Transverse colon (tissue), 4 donors: ENCODE measurements at regions of chr7 and their contacts with region 1.

Region 1: GRCh38 chr7:37198906-37199485 is 249.7 kb downstream of the ELMO1 start:
- DNase-seq: peak; percentile 81
- H3K4me3 ChIP-seq: no peak overlapping the region
- H3K27ac ChIP-seq: no peak overlapping the region
- H3K4me1 ChIP-seq: peaks cover 0 to 19% (median 17%) of the 10 kb centered on the region in 4 donors
- H3K27me3 ChIP-seq: no peaks in the 10 kb centered on the region
- CTCF ChIP-seq: peak; percentile 83 to 90 (median 84)
- EP300 ChIP-seq: no peak
- POLR2A ChIP-seq: no peak

Region 2: DNA sequence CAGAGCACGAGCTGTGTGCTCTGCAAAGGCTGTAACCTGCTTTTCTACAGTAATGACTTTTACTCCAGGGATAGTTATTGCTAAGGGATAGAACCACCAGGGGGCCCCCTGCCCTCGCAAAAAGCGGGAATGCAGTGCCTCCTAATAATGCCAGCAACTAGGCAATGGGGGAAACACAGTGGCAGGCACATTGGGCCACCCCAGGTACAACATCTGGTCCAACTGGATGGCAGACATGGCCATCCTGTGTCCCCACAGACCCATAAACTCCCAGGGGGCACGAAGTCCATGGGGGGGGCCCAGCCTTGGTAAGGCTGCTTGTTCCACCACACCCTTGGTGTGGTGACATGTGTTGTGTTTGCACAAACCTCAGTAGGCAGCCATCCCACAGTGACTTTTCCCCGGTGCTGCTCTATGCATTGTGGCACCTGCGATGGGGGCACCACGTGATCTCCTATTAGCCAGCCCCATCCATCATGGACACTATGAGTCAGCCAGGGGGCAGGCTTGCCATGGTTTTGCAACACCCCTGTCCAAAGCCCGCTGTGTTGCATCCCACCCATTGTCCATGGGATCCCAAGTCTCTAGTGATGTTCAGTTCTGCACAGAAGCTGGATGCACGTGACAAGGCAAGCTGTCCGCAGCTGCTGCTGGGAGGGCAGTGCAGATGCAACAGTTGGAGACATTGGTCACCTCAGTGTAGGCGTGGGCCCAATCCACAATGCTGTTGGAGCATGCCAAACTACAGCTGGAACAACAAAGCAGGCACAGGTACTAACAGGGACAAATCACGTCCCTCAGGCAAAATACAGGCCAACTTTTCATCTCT is 725.3 kb before region 1 on chr7:
- in situ Hi-C with region 1: loop called in 3 of 4 experiments (anchors 10 to 25 kb)
- intact Hi-C with region 1: no loop called
- DNase-seq: peak; percentile 55
- H3K4me3 ChIP-seq: no peak overlapping the region
- H3K27ac ChIP-seq: no peak overlapping the region
- H3K4me1 ChIP-seq: no peaks in the 10 kb centered on the region
- H3K27me3 ChIP-seq: no peaks in the 10 kb centered on the region
- CTCF ChIP-seq: peak; percentile 43 to 57 (median 44)
- EP300 ChIP-seq: no peak
- POLR2A ChIP-seq: no peak

Region 3: GRCh38 chr7:36670585-36671431 is 528.2 kb before region 1 on chr7:
- in situ Hi-C with region 1: loop called in 3 of 4 experiments (anchors 25 kb)
- intact Hi-C with region 1: no loop called
- DNase-seq: peak; percentile 79
- H3K4me3 ChIP-seq: no peak overlapping the region
- H3K27ac ChIP-seq: no peak overlapping the region
- H3K4me1 ChIP-seq: peaks cover 0 to 17% (median 5%) of the 10 kb centered on the region in 4 donors
- H3K27me3 ChIP-seq: no peaks in the 10 kb centered on the region
- CTCF ChIP-seq: peak; percentile 73 to 90 (median 85)
- EP300 ChIP-seq: no peak
- POLR2A ChIP-seq: no peak

Region 4: GRCh38 chr7:36686499-36686898 is 512.5 kb before region 1 on chr7:
- in situ Hi-C with region 1: loop called in 1 of 4 experiments (anchors 25 kb)
- intact Hi-C with region 1: no loop called
- DNase-seq: no peak
- H3K4me3 ChIP-seq: no peak overlapping the region
- H3K27ac ChIP-seq: no peak overlapping the region
- H3K4me1 ChIP-seq: peaks cover 0 to 6% (median 0%) of the 10 kb centered on the region in 4 donors
- H3K27me3 ChIP-seq: no peaks in the 10 kb centered on the region
- CTCF ChIP-seq: no peak
- EP300 ChIP-seq: no peak
- POLR2A ChIP-seq: no peak

Region 5: GRCh38 chr7:37150856-37151255 is 48.1 kb before region 1 on chr7:
- in situ Hi-C with region 1: no loop called
- intact Hi-C with region 1: no loop called
- DNase-seq: no peak
- H3K4me3 ChIP-seq: no peak overlapping the region
- H3K27ac ChIP-seq: no peak overlapping the region
- H3K4me1 ChIP-seq: peaks cover 6 to 21% (median 11%) of the 10 kb centered on the region in 4 donors
- H3K27me3 ChIP-seq: no peaks in the 10 kb centered on the region
- CTCF ChIP-seq: no peak
- EP300 ChIP-seq: no peak
- POLR2A ChIP-seq: no peak

Region 6: DNA sequence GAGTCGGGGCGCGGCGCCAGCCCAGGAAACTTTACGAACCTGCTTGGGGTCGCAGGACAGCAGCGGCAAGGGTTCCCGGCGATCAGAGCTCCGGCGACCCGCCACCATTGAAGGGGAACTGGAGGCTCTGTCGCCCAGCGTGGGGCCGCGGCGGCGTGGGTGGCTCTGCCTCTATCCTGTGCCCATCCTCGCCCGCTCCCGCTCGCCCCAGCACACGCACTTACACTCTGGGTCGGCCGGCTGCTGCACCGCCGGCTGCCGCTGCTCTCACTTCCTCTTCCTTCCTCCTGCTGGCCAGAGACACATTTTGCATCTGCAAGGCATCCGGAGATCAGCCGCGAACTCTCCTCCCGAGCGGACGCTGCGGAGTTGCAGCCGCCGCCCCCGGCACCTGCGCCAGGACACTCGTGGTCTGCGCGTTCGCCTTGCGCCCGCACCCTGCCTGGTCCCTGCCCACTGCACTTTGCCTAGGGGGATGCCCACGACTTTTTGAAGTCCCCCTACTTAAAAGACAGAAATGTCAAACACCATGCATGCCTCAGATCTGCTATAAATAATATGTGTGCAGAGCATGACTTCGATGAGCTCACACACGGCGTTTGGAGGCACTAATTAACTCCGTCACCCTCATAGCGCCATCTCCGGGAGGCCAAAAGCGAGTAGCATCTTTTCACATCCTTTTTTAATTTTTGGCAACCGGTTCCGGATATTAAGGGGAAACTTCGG is 249.8 kb after region 1 on chr7 and contains the start of gene ELMO1:
- in situ Hi-C with region 1: no loop called
- intact Hi-C with region 1: no loop called
- DNase-seq: peak; percentile 84
- H3K4me3 ChIP-seq: peak within 1 kb of the TSS; percentile 57 to 73 (median 66)
- H3K27ac ChIP-seq: peak within 1 kb of the TSS; percentile 85 to 89 (median 86)
- H3K4me1 ChIP-seq: peaks cover 0 to 21% (median 7%) of the 10 kb centered on the region in 4 donors
- H3K27me3 ChIP-seq: peaks cover 4% of the 10 kb centered on the region
- CTCF ChIP-seq: peak; percentile 42 to 78 (median 49)
- EP300 ChIP-seq: no peak
- POLR2A ChIP-seq: peak; percentile 77
- total RNA-seq, gene ELMO1: 24.6 to 120 (median 71.9) TPM